HepG2 (cell line): ENCODE measurements at regions of chr2 and their contacts with region 1.

Region 1: GRCh38 chr2:240143801-240144648 is 3.6 kb upstream of the OTOS start:
- DNase-seq: peak; percentile 47
- ATAC-seq: peak; percentile 85
- H3K4me3 ChIP-seq: peak overlapping the region in 1 of 3 experiments; percentile 17; a peak in 1 of 6 replicates
- H3K27ac ChIP-seq: no peak overlapping the region
- H3K4me1 ChIP-seq: peaks cover 19% of the 10 kb centered on the region; the same call in 1 of the 2 replicates
- H3K27me3 ChIP-seq: peaks cover 11 to 72% of the 10 kb centered on the region in 2 experiments; a peak in 4 of 5 replicates
- CTCF ChIP-seq: peak; percentile 99
- EP300 ChIP-seq: no peak
- POLR2A ChIP-seq: no peak
- RAD21 ChIP-seq: peak; percentile 97

Region 2: DNA sequence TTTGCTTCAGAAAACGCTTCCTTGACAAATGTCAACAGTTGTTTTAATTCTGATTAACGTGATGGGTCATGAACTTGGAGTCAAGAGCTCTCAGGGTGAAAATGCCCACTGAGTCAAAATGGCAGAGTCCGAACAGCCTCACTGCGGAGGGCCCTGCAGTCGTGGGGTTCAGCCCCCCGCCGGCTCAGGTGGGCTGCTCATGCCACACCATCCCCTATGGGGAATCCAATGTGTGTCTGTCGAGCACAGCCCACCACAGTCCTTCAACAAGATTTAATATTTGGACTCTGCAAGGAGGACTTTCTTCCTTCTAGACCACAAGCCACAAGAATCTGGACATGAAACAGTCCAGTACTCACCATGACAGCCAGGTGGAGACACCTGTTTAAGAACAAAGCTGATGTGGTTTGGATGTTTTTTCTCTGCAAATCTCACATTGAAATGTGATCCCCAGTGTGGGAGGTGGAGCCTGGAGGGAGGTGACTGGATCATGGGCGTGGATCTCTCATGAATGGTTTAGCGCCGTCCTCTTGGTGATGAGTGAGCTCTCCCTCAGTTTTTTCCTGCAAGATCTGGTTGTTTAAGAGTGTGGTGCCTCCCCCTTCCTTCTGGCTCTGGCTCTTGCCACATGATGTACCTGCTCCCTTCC is 319.9 kb before region 1 on chr2:
- CTCF ChIA-PET with region 1: no interaction called
- POLR2A ChIA-PET with region 1: no interaction called
- in situ Hi-C with region 1: loop called (anchors 5 kb)
- intact Hi-C with region 1: no loop called
- DNase-seq: peak; percentile 66
- ATAC-seq: peak; percentile 67
- H3K4me3 ChIP-seq: no peak overlapping the region
- H3K27ac ChIP-seq: no peak overlapping the region
- H3K4me1 ChIP-seq: no peaks in the 10 kb centered on the region
- H3K27me3 ChIP-seq: peaks cover 15 to 67% of the 10 kb centered on the region in 2 experiments; a peak in 4 of 5 replicates
- CTCF ChIP-seq: peak; percentile 64
- EP300 ChIP-seq: no peak
- POLR2A ChIP-seq: no peak
- RAD21 ChIP-seq: no peak

Region 3: DNA sequence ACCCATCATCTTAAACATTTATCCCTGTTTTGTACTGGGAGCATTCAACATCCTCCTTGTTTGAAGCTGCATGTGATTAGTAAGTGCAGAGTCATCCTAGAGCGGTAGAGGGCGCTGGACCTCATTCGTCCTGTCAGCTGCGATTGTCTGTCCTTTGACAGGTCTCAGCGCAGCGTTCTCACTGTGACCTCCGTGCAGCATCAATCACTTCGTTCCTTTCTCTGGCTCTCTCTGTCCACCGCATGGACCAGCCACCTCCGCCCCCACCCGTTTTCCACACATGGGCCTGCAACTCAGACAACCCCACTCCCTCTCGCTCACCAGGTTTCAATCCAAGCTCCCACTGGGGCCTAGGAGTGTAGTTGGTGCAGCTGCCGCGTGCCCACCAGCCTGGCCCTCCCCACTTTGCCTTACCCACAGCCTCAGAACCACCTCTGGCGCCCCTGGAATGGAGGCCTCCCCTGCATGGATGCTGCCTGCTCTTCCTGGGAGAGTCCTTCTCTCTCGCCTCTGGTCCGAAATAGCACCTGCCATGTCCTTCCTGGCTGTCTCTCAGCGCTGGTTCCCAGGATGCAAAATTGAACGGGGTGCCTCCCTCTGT is 209.4 kb before region 1 on chr2:
- CTCF ChIA-PET with region 1: interaction called, 7 read pairs
- POLR2A ChIA-PET with region 1: no interaction called
- in situ Hi-C with region 1: loop called (anchors 10 kb)
- intact Hi-C with region 1: loop called (anchors 10 kb)
- DNase-seq: peak; percentile 74
- ATAC-seq: peak; percentile 83
- H3K4me3 ChIP-seq: no peak overlapping the region
- H3K27ac ChIP-seq: no peak overlapping the region
- H3K4me1 ChIP-seq: no peaks in the 10 kb centered on the region
- H3K27me3 ChIP-seq: no peaks in the 10 kb centered on the region; a peak in 1 of 5 replicates
- CTCF ChIP-seq: peak; percentile 88
- EP300 ChIP-seq: no peak
- POLR2A ChIP-seq: no peak
- RAD21 ChIP-seq: no peak; the same call in 1 of the 2 replicates

Region 4: DNA sequence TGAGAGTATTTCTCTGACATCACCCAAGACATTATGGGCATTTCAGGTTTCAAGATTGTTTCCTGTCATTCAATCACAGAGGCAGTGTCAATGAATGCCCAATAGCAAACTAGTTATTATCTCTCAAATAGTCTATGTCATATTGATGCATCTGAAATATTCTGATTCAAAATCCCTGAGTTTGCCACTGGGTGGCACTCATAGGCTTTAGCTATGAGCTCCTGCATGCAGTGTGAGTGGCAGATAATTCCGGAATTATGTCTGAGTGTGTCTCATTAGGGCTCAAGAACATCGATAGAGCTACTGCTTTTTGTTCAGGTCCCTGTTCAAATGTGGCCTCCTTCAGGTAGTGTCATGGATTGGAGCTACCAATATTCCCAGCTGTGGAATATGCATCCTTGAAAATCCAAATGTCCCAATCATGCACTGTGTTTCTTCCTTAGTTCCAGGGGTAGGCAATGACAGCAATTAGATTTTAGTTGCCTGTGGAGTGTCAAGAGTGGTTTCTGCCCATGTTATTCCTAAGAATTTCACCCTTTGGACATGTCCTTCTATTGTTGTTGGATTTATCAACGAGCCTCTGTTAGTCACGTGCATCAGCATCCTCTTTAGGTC is 82.9 kb before region 1 on chr2:
- CTCF ChIA-PET with region 1: interaction called, 103 read pairs
- POLR2A ChIA-PET with region 1: interaction called, 4 read pairs
- in situ Hi-C with region 1: loop called (anchors 5 kb)
- intact Hi-C with region 1: loop called (anchors 1 kb)
- DNase-seq: peak; percentile 57
- ATAC-seq: peak; percentile 86
- H3K4me3 ChIP-seq: no peak overlapping the region
- H3K27ac ChIP-seq: no peak overlapping the region
- H3K4me1 ChIP-seq: no peaks in the 10 kb centered on the region
- H3K27me3 ChIP-seq: peaks cover 2 to 16% of the 10 kb centered on the region in 2 experiments; a peak in 4 of 5 replicates
- CTCF ChIP-seq: peak; percentile 81
- EP300 ChIP-seq: no peak
- POLR2A ChIP-seq: no peak
- RAD21 ChIP-seq: peak; percentile 64

Region 5: DNA sequence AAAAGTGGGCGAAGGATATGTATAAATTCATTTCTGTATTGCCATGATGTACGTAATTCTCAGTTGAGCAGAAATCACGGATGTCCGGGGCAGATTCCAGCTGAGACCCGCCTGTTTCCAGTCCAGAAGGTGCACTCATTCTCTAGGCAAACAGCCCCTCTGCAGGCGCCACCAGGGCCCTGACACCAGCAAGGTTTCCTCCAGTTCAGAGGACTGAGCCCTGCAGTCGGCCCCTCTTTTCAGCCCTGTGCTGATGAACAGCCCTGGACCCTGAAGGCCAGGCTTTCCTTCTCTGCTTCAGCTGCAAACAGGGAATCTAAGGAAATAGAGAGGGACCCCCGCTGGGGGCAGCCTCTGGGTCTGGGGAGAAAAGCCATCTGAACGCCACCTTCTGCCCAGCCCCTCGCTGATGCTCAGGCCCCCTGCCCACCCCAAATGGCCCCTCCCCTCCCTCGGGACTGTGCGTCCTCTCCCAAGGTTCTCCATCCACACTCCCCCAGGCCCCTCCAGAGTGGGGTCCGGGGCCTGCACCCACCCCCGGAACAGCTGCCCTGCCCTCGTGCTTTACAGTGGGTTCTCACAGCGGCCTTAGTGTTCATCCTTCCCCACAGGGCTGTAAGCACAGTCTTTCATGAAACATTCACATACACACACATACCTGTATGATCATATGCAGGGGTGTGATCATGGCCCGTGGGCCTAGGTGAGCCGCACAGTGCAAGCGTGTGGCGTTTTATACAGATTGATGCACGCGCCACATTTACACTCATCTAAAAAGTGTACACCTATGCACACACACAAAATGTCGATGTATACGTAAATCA is 20.0 kb before region 1 on chr2:
- CTCF ChIA-PET with region 1: no interaction called
- POLR2A ChIA-PET with region 1: no interaction called
- in situ Hi-C with region 1: no loop called
- intact Hi-C with region 1: no loop called
- DNase-seq: no peak
- ATAC-seq: peak; percentile 19; the same call in 2 of the 3 replicates
- H3K4me3 ChIP-seq: no peak overlapping the region
- H3K27ac ChIP-seq: no peak overlapping the region
- H3K4me1 ChIP-seq: no peaks in the 10 kb centered on the region
- H3K27me3 ChIP-seq: peaks cover 1 to 8% of the 10 kb centered on the region in 2 experiments; a peak in 2 of 5 replicates
- CTCF ChIP-seq: no peak
- EP300 ChIP-seq: no peak
- POLR2A ChIP-seq: no peak
- RAD21 ChIP-seq: no peak

Region 6: DNA sequence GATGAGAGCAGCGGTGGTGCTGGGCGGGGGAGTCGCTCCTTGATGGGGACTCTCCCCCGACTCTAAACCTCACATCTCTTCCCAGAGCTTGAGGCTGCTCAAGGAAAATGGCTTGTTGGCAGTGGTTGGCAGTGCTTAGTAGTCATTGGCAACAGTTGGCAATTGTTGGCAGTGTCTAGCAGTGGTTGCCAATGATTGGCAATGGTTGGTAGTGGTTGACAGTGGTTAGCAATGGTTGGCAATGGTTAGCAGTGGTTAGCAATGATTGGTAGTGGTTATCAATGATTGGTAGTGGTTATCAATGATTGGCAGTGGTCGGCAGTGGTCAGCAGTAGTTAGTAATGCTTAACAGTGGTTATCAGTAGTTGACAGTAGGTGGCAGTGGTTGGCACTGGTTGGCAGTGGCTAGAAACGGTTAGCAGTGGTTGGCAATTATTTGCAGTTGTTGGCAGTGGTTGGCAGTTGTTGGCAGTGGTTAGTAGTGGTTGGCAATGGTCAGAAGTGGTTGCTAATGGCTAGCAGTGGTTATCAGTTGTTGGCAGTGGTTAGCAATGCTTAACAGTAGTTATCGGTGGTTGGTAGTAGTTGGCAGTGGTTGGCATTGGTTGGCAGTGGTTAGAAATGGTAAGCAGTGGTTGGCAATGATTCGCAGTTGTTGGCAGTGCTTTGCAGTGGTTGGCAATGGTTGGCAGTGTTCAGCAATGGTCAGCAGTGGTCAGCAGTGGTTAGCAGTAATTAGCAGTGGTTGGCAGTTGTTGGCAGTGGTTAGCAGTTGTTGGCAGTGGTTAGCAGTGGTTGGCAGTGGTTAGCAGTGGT is 81.8 kb after region 1 on chr2:
- CTCF ChIA-PET with region 1: no interaction called
- POLR2A ChIA-PET with region 1: no interaction called
- in situ Hi-C with region 1: no loop called
- intact Hi-C with region 1: no loop called
- DNase-seq: no peak
- ATAC-seq: no peak
- H3K4me3 ChIP-seq: no peak overlapping the region
- H3K27ac ChIP-seq: no peak overlapping the region
- H3K4me1 ChIP-seq: no peaks in the 10 kb centered on the region
- H3K27me3 ChIP-seq: peaks cover 3 to 58% of the 10 kb centered on the region in 2 experiments; a peak in 4 of 5 replicates
- CTCF ChIP-seq: peak; percentile 23; the same call in 1 of the 2 replicates
- EP300 ChIP-seq: no peak
- POLR2A ChIP-seq: no peak
- RAD21 ChIP-seq: no peak